ENCODE measurements at regions of chr3 and their contacts with region 1.

Region 1: GRCh38 chr3:157201648-157202278 is 41.8 kb upstream of the CCNL1 start:
- DNase-seq: peak; percentile 56 to 72 (median 69)
- H3K4me3 ChIP-seq: no peak overlapping the region
- H3K27ac ChIP-seq: no peak overlapping the region
- H3K4me1 ChIP-seq: no peaks in the 10 kb centered on the region
- H3K27me3 ChIP-seq: no peaks in the 10 kb centered on the region

Region 2: GRCh38 chr3:157122116-157122515 is 79.6 kb before region 1 on chr3:
- CTCF ChIA-PET with region 1: no interaction called
- POLR2A ChIA-PET with region 1: no interaction called
- DNase-seq: peak in 1 of 3 donors; percentile 35
- H3K4me3 ChIP-seq: no peak overlapping the region
- H3K27ac ChIP-seq: no peak overlapping the region
- H3K4me1 ChIP-seq: peaks cover 0 to 4% (median 1%) of the 10 kb centered on the region in 4 experiments
- H3K27me3 ChIP-seq: peaks cover 0 to 35% (median 8%) of the 10 kb centered on the region in 5 experiments

Region 3: GRCh38 chr3:157159762-157160657 is 41.8 kb before region 1 on chr3 and contains the start of gene CCNL1:
- CTCF ChIA-PET with region 1: interaction called, 22 read pairs
- POLR2A ChIA-PET with region 1: interaction called, 3 read pairs
- DNase-seq: peak; percentile 98 to 99 (median 99)
- H3K4me3 ChIP-seq: peak within 1 kb of the TSS; percentile 61 to 99 (median 98)
- H3K27ac ChIP-seq: peak within 1 kb of the TSS; percentile 99 to 100
- H3K4me1 ChIP-seq: peaks cover 16 to 66% (median 38%) of the 10 kb centered on the region in 4 experiments
- H3K27me3 ChIP-seq: no peaks in the 10 kb centered on the region

Region 4: DNA sequence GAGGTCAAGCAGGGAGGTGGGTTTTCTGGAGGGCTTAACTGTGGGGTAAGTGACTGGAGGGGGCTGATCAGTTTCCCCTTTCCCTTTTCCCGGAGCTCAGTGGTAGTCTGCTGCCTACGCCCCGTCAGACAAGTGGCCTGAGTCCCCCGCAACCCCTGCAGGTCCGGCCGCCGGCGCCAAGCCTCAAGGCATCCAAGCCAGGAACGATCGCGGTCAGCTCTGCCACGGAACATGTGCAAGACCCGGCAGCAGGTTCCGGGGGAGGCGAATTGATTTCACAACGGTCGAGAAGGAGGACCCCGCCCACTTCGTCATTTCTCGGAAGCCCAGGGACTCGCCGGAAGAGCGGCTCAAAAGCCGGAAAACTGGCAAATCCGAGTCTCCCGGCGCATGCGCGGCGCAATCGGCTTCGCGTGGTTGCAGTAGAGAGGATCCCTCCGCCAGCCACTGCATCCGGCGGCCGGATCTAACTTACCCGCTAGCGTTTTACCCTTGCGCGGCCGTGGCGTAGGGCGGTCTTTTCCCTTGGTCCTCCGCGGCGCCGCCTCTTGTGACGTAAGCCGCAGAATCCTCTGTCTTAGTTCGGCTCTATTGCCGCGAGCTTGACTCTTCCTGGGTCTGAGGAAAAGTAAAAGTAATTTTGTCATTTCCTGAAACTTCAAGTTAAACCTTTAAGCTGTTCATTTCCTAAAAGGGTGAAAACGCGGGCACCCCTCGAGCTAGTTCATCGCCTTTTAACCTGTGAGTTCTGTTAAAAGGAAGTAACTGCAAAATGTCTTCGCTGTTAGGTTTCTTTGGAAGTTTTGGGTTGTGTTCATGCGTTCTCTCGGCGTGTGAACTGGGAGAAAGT is 26.9 kb before region 1 on chr3:
- CTCF ChIA-PET with region 1: interaction called, 15 read pairs
- POLR2A ChIA-PET with region 1: interaction called, 6 read pairs
- DNase-seq: peak; percentile 100
- H3K4me3 ChIP-seq: peak overlapping the region; percentile 23 to 99 (median 90)
- H3K27ac ChIP-seq: peak overlapping the region; percentile 93 to 98
- H3K4me1 ChIP-seq: peaks cover 5 to 36% (median 14%) of the 10 kb centered on the region in 4 experiments
- H3K27me3 ChIP-seq: no peaks in the 10 kb centered on the region

Region 5: DNA sequence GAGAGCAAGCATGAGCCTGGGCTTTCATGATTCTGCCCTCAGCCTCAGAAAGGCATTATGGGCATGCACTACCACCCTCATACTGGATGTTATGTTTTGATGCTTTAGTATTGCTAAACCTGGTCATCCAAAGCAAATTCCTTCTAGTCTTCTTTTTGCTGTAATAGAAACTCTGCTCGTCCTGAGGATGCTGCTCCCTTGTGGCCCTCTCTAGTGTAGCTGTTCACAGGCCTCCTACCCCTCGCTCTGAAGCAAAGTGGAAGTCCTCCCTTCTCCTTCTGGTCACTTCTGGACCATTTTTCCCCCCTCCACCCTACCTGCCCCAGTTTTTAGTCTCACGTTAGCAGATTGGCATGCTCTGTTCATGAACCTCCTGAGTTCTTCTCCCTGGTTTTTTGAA is 18.9 kb before region 1 on chr3:
- CTCF ChIA-PET with region 1: interaction called, 11 read pairs
- POLR2A ChIA-PET with region 1: no interaction called
- DNase-seq: no peak
- H3K4me3 ChIP-seq: no peak overlapping the region
- H3K27ac ChIP-seq: no peak overlapping the region
- H3K4me1 ChIP-seq: no peaks in the 10 kb centered on the region
- H3K27me3 ChIP-seq: no peaks in the 10 kb centered on the region

Region 6: DNA sequence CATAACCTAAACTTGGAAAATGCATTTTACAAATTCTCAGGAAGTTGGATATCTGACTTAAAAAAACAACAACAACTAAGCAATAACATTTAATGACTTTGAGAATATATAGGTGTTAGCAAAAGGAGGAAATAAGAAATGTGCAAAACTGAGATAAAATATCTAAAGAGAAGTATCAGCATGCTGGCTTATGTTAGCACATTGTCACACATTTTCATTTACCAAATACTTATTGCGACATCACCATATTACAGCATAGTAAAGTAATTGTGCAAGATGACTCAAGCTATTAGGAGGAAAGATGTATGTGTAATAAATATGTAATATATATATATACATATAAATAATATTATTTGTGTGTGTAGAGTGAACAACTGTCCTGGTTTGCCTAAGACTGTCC is 244.1 kb after region 1 on chr3:
- CTCF ChIA-PET with region 1: interaction called, 12 read pairs
- POLR2A ChIA-PET with region 1: no interaction called
- DNase-seq: peak; percentile 40 to 89 (median 79)
- H3K4me3 ChIP-seq: no peak overlapping the region
- H3K27ac ChIP-seq: no peak overlapping the region
- H3K4me1 ChIP-seq: peaks cover 0 to 4% (median under 1%) of the 10 kb centered on the region in 4 experiments
- H3K27me3 ChIP-seq: no peaks in the 10 kb centered on the region

Region 7: DNA sequence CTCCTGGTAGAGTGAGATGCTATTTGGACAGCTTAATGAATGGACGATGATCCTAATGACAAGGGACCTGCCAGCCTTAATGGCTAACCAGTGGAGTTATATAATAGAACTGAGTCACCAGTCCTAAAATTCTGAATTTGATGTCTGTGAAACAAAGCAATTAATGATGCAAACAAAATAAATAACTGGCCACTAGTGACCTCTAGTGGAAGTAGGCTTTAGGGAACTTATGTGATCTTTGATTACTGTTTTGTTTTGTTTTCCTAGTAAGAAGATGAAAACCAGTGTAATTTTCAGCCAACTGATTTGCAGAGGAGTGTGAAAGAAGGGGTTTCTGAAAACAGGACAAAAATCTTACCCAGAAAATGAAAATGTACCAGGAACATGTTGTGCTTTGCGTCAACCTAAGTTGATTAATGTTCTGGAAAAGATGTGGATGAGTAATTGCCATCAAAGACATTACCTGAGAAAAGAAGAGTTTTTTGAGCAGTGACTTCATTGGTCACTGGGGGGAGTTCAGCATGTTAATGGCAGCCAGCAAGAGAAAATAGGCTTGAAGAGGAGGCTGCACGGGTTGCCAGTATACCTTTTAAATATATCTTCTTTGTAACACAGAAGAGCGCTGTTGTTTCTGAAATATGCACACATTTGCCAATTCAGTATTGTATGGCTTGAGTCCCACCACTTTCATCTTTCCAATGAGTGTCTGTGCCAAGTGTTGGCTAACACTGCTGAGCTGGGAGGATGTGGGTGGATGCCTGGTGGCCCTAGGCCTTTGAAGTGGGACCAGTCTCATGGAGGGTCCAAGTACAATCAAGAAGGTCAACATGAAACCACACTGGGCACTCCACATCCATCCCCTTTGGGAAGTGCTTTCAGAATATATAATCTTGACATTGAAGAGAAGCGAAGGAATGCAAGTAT is 292.1 kb after region 1 on chr3:
- CTCF ChIA-PET with region 1: interaction called, 26 read pairs
- POLR2A ChIA-PET with region 1: no interaction called
- DNase-seq: peak; percentile 42 to 77 (median 69)
- H3K4me3 ChIP-seq: no peak overlapping the region
- H3K27ac ChIP-seq: no peak overlapping the region
- H3K4me1 ChIP-seq: peaks cover 0 to 9% (median 5%) of the 10 kb centered on the region in 4 experiments
- H3K27me3 ChIP-seq: peaks cover 0 to 3% (median 2%) of the 10 kb centered on the region in 5 experiments

Region 8: GRCh38 chr3:158085358-158085757 is 883.6 kb after region 1 on chr3:
- CTCF ChIA-PET with region 1: no interaction called
- POLR2A ChIA-PET with region 1: no interaction called
- DNase-seq: no peak
- H3K4me3 ChIP-seq: no peak overlapping the region
- H3K27ac ChIP-seq: no peak overlapping the region
- H3K4me1 ChIP-seq: no peaks in the 10 kb centered on the region
- H3K27me3 ChIP-seq: peaks cover 3 to 74% (median 26%) of the 10 kb centered on the region in 5 experiments

Measured in common myeloid progenitor, CD34-positive (primary cell).